Left ventricle myocardium inferior (tissue), 1 donor: ENCODE measurements at regions of chr4 and their contacts with region 1.

Region 1: GRCh38 chr4:54228056-54228527 is 1.0 kb upstream of the PDGFRA start:
- DNase-seq: peak; percentile 80
- H3K4me3 ChIP-seq: peak overlapping the region; percentile 74
- H3K27ac ChIP-seq: peak overlapping the region; percentile 74
- H3K4me1 ChIP-seq: peaks cover 74% of the 10 kb centered on the region
- H3K27me3 ChIP-seq: peaks cover 100% of the 10 kb centered on the region
- CTCF ChIP-seq: peak; percentile 81

Region 2: DNA sequence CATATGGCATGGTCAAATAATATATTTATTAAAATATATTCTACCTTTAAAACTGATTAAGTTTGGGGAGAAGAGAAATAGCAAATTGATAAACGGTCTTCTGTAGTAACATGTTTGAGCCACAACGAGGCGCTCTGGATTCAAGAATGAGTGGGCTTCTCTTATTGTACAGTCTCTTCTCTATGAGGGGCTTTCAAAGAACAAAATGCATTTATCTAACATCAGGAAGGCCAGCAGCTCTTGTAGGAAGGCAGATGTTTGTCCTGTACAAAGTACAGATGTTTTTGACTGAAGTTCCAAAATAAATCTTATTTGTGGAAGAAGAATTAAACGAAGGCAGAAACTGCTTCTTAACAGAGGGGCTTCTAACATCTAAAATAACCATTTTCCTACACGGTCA is 1212.4 kb before region 1 on chr4:
- intact Hi-C with region 1: loop called (anchors 10 kb)
- DNase-seq: no peak
- H3K4me3 ChIP-seq: no peak overlapping the region
- H3K27ac ChIP-seq: peak overlapping the region; percentile 14
- H3K4me1 ChIP-seq: peaks cover 67% of the 10 kb centered on the region
- H3K27me3 ChIP-seq: no peaks in the 10 kb centered on the region
- CTCF ChIP-seq: peak; percentile 75

Region 3: DNA sequence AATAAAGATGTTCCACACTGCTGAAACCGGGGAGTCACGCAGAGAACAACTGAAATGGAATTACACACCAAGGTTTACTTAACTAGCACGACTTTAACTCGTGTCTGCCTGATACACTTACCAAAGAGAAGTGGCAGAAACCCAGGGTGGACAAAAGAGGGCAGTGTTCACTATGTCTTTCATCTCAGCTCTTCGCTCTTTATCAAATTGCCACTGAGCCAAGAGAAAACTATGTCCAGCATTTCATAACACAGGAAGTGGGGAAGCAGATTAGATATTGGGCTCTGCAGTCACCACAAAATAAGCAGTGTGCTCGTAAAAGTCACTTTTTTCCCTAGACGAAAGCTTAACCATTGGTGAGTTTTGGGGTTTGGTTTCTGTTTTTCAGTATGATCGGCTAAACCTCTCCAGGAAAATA is 319.4 kb before region 1 on chr4:
- intact Hi-C with region 1: loop called (anchors 5 kb)
- DNase-seq: no peak
- H3K4me3 ChIP-seq: peak overlapping the region; percentile 46
- H3K27ac ChIP-seq: peak overlapping the region; percentile 53
- H3K4me1 ChIP-seq: peaks cover 35% of the 10 kb centered on the region
- H3K27me3 ChIP-seq: peaks cover 77% of the 10 kb centered on the region
- CTCF ChIP-seq: peak; percentile 77

Region 4: DNA sequence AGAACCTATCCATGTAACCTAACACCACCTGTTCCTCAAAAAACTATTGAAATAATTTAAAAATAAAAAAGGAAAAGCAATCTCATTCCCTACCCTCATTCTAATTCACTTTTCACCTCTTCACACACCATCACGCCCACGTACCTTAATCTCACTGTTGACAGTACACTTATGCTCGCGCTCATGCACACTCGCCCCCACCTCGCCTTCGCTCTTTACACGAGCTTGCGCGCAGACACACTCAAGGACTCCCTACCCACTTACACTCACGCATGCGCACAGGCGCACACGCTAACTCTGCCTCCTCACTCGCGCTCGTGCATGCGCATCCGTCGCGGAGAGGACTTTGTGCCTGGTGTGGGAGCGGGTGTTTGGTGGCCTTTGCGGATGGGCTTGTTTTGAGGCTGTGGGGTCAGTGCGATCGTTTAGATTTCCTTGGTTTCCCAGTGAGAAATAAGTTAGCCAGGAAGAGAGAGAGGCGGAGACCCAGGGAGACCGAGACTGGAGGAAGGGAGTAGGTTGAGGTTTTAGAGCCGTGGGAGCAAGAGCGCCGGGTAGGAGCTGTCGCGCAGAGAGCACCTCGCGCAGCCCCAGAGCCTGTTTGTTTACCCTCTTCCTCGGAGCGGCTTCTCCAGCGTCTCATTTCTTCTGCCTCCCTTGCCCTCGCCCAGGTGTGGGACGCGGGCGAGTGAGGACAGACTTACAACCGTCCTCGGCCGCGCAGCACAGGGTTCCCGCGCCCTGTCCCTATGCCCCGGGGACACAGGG is 136.3 kb before region 1 on chr4:
- intact Hi-C with region 1: loop called (anchors 10 kb)
- DNase-seq: peak; percentile 82
- H3K4me3 ChIP-seq: peak overlapping the region; percentile 67
- H3K27ac ChIP-seq: peak overlapping the region; percentile 3
- H3K4me1 ChIP-seq: peaks cover 17% of the 10 kb centered on the region
- H3K27me3 ChIP-seq: peaks cover 67% of the 10 kb centered on the region
- CTCF ChIP-seq: no peak

Region 5: GRCh38 chr4:54127660-54128059 is 100.4 kb before region 1 on chr4:
- intact Hi-C with region 1: no loop called
- DNase-seq: no peak
- H3K4me3 ChIP-seq: no peak overlapping the region
- H3K27ac ChIP-seq: no peak overlapping the region
- H3K4me1 ChIP-seq: no peaks in the 10 kb centered on the region
- H3K27me3 ChIP-seq: peaks cover 13% of the 10 kb centered on the region
- CTCF ChIP-seq: no peak